ENCODE measurements at regions of chr2 and their contacts with region 1.

Region 1: DNA sequence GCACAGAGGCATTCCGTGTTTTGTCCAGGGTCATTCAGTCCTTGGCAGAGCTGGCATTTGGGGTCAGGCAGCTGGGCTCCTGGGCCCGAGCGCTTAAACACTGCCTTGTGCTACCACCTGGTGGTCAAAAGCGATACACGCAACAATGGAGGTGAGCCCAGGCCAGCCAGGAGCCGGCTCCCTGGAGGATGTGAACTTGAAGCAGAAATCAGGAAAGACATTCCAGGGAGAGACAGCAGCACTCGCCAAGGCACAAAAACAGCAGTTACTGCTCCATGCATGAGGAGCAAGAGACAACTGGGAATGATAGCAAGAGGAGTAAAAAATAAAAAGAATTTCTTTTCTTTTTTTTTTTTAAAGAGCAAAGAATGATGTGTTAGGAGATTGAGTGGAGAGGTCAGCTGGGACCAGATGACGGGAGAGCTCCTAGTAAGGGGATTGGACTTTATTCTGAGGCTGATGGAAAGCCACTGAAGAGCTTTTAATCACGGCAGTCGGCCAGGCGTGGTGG is 20.7 kb downstream of the SCYGR8 start:
- DNase-seq: peak; percentile 59 to 96 (median 78)

Region 2: DNA sequence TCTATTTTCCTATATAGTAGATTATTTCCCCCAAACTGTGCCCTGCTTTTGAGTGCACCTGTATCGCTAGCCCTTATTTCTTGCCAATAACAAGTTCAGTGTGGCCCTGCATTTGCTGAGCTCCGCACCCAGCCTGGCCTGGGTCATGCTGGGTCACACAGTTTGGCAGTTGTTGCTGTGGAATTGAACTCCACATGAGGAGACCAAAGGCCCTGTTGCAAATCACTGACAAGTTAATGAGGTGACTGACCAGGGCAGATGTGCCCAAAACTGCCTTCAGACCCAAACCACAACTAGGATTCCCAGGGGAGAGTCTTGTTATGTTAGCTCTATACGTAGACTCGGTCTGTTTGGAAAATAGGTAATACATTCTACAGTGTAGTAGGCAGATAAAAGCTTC is 633.4 kb before region 1 on chr2:
- intact Hi-C with region 1: loop called (anchors 5 kb)
- DNase-seq: peak in 1 of 10 donors; percentile 29

Region 3: DNA sequence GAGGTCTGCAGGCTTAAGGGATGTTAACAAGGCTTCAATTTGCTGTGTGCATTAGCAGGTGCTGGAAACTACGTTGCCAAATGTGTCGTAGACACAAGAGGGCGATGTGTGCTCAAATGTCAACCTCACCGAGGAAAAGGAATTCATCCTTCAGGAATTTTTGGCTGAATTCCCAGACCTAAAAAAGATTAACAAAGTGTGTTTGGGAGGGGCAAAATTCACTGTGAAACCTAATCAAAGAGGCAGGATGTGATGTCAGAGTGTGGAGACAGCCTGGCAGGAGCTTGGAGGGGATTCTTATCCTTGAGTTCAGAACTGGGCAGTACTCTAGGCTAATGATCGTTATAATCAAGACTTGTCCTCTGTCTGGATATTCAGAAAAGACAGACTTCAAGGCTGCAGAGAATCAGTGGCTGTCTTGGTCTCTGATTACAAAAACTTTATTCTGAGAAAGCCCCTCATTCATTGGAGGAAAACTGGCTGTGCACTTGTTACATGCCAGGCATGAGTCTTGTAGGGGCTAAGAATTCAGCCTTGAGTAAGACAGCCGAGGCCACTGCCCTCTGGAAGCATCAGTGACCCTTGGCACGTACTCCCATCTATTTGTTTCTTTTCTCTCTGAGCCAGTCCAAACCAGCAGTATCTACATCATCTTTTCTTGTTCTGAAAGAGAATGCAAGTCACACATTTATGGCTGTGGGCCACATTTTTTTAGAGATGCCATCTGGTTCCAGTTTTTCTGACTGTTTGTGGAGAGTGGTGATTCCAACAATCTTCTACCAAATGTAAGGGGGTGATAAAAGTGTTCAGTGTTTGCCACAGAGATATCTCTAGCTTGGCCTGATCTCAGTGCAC is 360.0 kb before region 1 on chr2:
- intact Hi-C with region 1: loop called (anchors 2 kb)
- DNase-seq: peak in 6 of 10 donors; percentile 37 to 90 (median 43)

Region 4: GRCh38 chr2:227592694-227593387 is 173.6 kb before region 1 on chr2:
- intact Hi-C with region 1: no loop called
- DNase-seq: no peak

Region 5: DNA sequence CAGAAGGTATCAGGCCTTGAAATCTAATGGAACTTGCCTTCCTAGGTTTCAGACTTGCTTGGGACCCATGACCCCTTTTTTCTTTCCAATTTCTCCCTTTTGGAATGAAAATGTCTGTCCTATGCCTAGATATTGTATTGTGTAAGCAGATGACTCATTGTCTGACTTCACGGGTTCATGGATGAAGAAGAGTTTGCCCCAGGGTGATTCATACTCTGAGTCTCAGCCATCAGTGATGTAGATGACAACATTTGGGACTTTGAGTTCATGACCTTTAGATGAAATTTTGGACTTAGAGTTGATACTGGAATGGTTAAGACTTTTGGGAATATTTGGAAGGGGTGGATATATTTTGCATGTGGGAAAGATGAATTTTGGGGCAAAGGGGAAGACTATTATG is 111.0 kb before region 1 on chr2:
- intact Hi-C with region 1: loop called (anchors 1 kb)
- DNase-seq: no peak

Region 6: GRCh38 chr2:227862227-227862740 is 95.9 kb after region 1 on chr2:
- intact Hi-C with region 1: loop called (anchors 10 kb)
- DNase-seq: no peak

Measured in posterior cingulate gyrus (tissue), 11 donors.